Upper lobe of right lung (tissue), 1 donor: ENCODE measurements at regions of chr16 and their contacts with region 1.

Region 1: GRCh38 chr16:84617791-84618580 is at the start of gene COTL1:
- DNase-seq: peak; percentile 98
- ATAC-seq: peak; percentile 91
- H3K4me3 ChIP-seq: peak within 1 kb of the TSS; percentile 83
- H3K27ac ChIP-seq: peak within 1 kb of the TSS; percentile 66
- H3K4me1 ChIP-seq: peaks cover 12% of the 10 kb centered on the region
- H3K27me3 ChIP-seq: no peaks in the 10 kb centered on the region
- CTCF ChIP-seq: no peak
- total RNA-seq, gene COTL1: 129 TPM

Region 2: GRCh38 chr16:84434800-84435199 is 183.2 kb before region 1 on chr16:
- intact Hi-C with region 1: no loop called
- DNase-seq: no peak
- ATAC-seq: no peak
- H3K4me3 ChIP-seq: no peak overlapping the region
- H3K27ac ChIP-seq: no peak overlapping the region
- H3K4me1 ChIP-seq: no peaks in the 10 kb centered on the region
- H3K27me3 ChIP-seq: no peaks in the 10 kb centered on the region
- CTCF ChIP-seq: no peak

Region 3: GRCh38 chr16:84511180-84511824 is 106.7 kb before region 1 on chr16:
- intact Hi-C with region 1: loop called (anchors 5 kb)
- DNase-seq: peak; percentile 90
- ATAC-seq: peak; percentile 88
- H3K4me3 ChIP-seq: no peak overlapping the region
- H3K27ac ChIP-seq: no peak overlapping the region
- H3K4me1 ChIP-seq: peaks cover 3% of the 10 kb centered on the region
- H3K27me3 ChIP-seq: no peaks in the 10 kb centered on the region
- CTCF ChIP-seq: peak; percentile 99